Activated naive CD4-positive, alpha-beta T cell treated with anti-CD3 and anti-CD28 coated beads, Interleukin-2, amount 10 ng/mL, durations not matched to agents 7 days and 5 days (primary cell): ENCODE measurements at regions of chr11 and their contacts with region 1.

Region 1: DNA sequence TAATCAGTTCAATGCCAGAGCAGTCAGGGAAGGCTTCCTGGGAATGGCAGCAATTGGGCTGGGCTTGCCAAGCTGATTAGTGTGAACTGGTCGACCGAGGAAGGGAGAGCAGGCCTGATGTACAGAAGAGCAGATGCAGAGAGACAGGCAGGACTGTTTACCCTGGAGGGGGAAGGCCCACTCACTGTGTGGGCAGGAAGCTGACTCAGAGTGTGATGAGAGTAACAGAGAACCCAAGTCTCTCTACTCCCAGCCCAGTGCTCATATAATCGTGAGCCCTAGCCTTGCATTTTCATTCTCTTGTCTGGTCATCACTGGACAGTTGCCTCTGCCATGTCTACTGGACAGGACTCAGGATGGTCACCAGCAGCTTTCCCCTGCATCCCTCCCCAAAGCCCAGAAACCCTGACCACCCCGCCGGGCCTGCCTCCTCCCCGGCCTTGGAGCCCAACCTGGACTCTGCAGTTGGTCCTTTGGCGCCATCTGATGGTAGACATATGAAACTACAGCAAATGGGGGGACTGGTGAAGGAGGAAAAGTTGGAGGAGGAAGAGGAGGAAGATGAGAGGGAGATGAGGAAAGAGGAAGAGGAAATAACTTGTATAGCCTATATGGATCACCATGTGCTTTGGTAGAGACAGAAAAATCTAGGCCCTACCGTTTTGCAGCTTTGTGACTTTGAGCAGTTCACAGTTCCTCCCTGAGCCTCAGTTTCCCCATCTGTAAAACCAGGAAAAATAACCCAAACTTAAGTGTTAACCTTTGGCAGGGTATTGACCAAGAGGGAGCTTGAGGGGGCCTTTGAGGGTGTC is 43.4 kb upstream of the PRDM11 start:
- DNase-seq: peak; percentile 60
- H3K4me3 Mint-ChIP-seq: peak overlapping the region; percentile 45
- H3K27ac Mint-ChIP-seq: peak overlapping the region; percentile 57
- H3K4me1 Mint-ChIP-seq: peaks cover 11% of the 10 kb centered on the region
- H3K27me3 Mint-ChIP-seq: peaks cover 52% of the 10 kb centered on the region

Region 2: DNA sequence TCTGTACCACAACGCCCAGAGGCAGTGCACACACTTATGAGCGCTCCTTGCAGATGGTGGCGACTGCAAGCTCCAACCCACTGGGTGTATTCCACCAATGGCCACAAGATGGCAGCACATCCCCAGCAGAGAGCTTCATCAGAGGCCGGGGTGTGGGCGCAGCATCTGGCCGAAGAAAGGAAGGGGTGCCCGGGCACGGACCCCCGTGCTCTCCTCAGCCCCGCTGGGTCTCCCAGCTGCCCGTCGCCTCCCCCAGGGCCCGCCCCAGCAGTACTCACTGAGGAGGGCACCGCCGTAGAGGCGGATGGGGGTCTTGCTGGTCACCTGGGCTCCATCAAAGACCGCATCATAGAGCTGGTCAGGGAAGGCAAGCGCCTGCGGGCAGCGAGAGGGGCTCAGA is 166.5 kb before region 1 on chr11:
- CTCF ChIA-PET with region 1: interaction called, 382 read pairs
- DNase-seq: peak; percentile 88
- H3K4me3 Mint-ChIP-seq: no peak overlapping the region
- H3K27ac Mint-ChIP-seq: no peak overlapping the region
- H3K4me1 Mint-ChIP-seq: peaks cover 4% of the 10 kb centered on the region
- H3K27me3 Mint-ChIP-seq: peaks cover 9% of the 10 kb centered on the region

Region 3: DNA sequence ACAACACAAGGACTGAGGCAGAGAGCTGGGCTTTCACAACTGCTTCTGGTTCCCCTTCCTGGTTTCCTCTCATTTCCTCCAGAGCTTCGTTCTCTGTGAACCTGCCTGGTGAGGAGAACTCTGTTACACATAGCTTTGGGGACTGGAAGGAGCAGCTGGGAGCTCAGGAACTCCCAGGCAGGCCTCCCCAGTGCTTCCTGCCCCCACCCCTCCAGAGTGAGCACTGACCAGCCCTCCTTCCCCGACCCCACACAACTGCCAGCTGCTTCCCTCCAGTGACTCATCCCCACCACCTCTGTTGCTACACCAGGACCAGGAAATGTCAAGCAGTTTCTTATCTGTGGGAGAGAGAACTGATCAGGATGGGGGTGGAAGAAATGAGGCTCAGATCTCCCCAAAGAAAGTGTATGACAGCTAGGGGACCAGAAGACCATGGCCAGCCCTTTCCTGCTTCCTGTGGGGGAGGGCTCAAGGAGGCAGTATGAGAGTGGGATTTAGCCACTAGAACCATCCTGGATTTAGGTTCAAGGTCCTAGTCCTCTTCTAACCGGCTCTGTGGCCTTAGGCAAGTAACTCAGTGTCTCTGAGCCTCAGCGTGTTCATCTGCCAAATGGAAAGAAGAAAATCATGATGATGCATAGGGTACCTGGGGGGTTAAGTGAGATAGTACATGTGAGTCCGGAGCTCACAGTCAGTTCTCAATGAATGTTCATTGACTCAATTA is 147.8 kb before region 1 on chr11:
- CTCF ChIA-PET with region 1: interaction called, 11 read pairs
- DNase-seq: no peak
- H3K4me3 Mint-ChIP-seq: no peak overlapping the region
- H3K27ac Mint-ChIP-seq: no peak overlapping the region
- H3K4me1 Mint-ChIP-seq: peaks cover 2% of the 10 kb centered on the region
- H3K27me3 Mint-ChIP-seq: peaks cover 39% of the 10 kb centered on the region

Region 4: GRCh38 chr11:45017329-45017728 is 85.7 kb before region 1 on chr11:
- CTCF ChIA-PET with region 1: no interaction called
- DNase-seq: no peak
- H3K4me3 Mint-ChIP-seq: no peak overlapping the region
- H3K27ac Mint-ChIP-seq: no peak overlapping the region
- H3K4me1 Mint-ChIP-seq: peaks cover 13% of the 10 kb centered on the region
- H3K27me3 Mint-ChIP-seq: peaks cover 24% of the 10 kb centered on the region

Region 5: GRCh38 chr11:45079943-45080719 is 22.9 kb before region 1 on chr11:
- CTCF ChIA-PET with region 1: interaction called, 41 read pairs
- DNase-seq: peak; percentile 74
- H3K4me3 Mint-ChIP-seq: no peak overlapping the region
- H3K27ac Mint-ChIP-seq: peak overlapping the region; percentile 85
- H3K4me1 Mint-ChIP-seq: peaks cover 26% of the 10 kb centered on the region
- H3K27me3 Mint-ChIP-seq: peaks cover 20% of the 10 kb centered on the region

Region 6: DNA sequence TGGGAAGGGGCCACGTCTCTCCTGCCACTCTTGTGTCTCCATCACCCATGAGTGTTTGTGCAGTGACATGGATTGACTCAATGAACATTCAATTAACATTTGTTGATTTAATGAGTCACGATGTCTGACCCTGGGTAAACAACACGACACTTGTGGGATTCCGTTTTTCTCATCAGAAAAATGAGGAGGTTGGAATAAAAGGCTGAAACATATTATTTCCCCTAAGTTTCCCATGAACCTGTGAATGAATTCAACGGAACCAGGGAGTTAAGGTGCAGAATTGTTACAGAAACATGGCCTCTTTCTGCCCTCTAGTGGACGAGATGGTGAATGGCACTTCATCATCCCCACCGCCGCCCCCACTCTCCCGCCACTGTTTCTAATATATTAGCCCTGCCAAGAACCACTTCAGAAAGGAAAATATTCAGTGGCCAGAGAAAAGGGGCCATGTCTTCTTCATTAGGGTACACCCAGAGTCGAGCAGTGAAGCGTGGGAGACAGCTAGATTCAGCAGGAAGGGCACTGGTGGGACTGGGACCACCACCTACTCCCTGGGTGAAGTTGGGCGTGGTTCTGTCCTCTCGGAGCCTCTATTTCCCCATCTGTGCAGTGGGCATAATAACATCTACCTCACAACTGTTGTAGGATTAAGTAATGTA is 229.4 kb after region 1 on chr11:
- CTCF ChIA-PET with region 1: interaction called, 108 read pairs
- DNase-seq: peak; percentile 45
- H3K4me3 Mint-ChIP-seq: no peak overlapping the region
- H3K27ac Mint-ChIP-seq: no peak overlapping the region
- H3K4me1 Mint-ChIP-seq: no peaks in the 10 kb centered on the region
- H3K27me3 Mint-ChIP-seq: peaks cover 30% of the 10 kb centered on the region